ENCODE measurements at regions of chr19 and their contacts with region 1.

Region 1: DNA sequence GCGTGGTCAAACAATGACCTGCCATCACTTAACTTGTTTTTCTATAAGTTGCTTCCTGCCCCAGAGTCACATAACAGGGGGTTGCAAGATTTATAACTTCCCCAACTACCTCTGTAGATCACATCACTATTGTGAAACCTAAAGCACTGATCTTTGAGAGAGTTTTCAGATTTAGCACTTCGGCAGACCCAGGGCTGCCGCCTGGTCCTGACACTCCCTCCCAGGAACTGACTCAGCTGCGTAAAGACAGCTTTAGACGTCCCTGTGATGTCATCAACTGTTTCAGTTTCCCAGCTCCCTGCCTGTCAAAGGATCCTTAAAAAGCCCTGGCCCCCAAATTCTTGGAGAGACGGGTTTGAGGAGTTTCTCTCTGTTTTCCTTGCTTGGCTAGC is 33.3 kb downstream of the IGFL2 start:
- DNase-seq: peak; percentile 60
- ATAC-seq: peak; percentile 91
- H3K4me3 Mint-ChIP-seq: no peak overlapping the region
- H3K27ac Mint-ChIP-seq: no peak overlapping the region
- H3K4me1 Mint-ChIP-seq: peaks cover 27% of the 10 kb centered on the region
- H3K27me3 Mint-ChIP-seq: peaks cover 37% of the 10 kb centered on the region

Region 2: DNA sequence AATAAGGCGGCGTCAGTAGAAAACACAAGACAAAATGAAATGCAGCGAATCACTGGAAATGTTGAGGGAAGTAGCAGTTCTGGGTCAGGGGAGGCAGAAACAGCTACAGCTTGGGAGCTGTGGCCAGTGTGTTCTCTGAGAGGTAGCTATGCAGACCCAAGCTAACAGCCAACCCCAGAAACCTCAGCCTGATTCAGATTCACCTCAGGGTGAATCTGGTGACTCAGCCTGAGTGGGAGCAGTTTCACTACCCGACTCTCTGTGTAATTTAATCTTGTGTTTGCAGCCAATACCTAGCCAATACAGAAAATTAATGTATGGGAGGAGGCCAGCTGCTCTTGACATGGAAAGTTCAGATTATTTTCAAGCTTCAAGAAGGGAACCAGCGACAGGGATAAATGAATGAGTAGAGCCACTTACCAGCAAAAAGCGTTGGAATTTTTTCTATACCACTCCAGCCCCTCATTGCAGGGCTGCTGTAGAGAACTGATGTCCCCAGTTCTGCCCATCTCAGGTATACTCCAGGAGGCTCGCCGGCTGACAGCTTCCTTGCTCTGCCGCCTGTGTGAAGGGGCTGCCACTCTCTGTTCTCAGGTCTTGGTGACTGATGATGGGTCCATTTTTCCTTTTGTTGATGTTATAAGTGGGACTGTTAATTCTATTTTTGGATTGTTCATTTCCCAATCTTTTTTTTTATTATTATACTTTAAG is 65.8 kb before region 1 on chr19:
- CTCF ChIA-PET with region 1: interaction called, 4 read pairs
- POLR2A ChIA-PET with region 1: no interaction called
- intact Hi-C with region 1: loop called in 1 of 2 experiments (anchors 1 kb)
- DNase-seq: peak; percentile 84
- ATAC-seq: peak; percentile 99
- H3K4me3 Mint-ChIP-seq: no peak overlapping the region
- H3K27ac Mint-ChIP-seq: no peak overlapping the region
- H3K4me1 Mint-ChIP-seq: peaks cover 13% of the 10 kb centered on the region
- H3K27me3 Mint-ChIP-seq: peaks cover 59% of the 10 kb centered on the region

Measured in activated CD4-positive, alpha-beta T cell treated with anti-CD3 and anti-CD28 coated beads for 36 hours (primary cell).